BJ (cell line): ENCODE measurements at regions of chr7 and their contacts with region 1.

Region 1: GRCh38 chr7:133434055-133434865 is 181.4 kb downstream of the EXOC4 start:
- DNase-seq: no peak
- H3K4me3 ChIP-seq: no peak overlapping the region
- H3K27me3 ChIP-seq: no peaks in the 10 kb centered on the region
- CTCF ChIP-seq: peak; percentile 54

Region 2: GRCh38 chr7:132709971-132710567 is 724.2 kb before region 1 on chr7:
- CTCF ChIA-PET with region 1: interaction called, 14 read pairs
- POLR2A ChIA-PET with region 1: no interaction called
- DNase-seq: no peak
- H3K4me3 ChIP-seq: no peak overlapping the region
- H3K27me3 ChIP-seq: no peaks in the 10 kb centered on the region; the same call in 1 of the 2 replicates
- CTCF ChIP-seq: peak; percentile 62

Region 3: GRCh38 chr7:133314084-133314483 is 120.2 kb before region 1 on chr7:
- CTCF ChIA-PET with region 1: no interaction called
- POLR2A ChIA-PET with region 1: interaction called, 14 read pairs
- DNase-seq: no peak
- H3K4me3 ChIP-seq: no peak overlapping the region
- H3K27me3 ChIP-seq: no peaks in the 10 kb centered on the region
- CTCF ChIP-seq: no peak

Region 4: DNA sequence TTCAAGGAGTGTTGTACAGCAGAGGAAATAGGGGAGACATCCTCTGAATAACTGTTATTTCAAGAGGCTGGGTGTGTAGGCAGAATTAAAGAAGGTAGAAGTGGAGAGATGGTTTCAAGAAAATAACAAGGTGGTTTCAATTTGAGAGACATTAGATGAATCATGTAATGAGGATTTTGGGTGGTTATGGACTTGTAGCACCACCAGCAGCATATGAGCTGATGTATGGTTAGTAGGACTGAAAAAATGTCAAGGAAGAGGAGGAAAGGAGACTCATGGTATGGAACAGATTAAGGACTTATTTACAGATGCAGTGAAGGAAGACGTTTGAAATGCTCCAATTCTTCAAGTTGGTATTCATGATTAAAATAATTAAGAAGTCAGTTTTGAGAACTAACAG is 15.2 kb before region 1 on chr7:
- CTCF ChIA-PET with region 1: interaction called, 10 read pairs
- POLR2A ChIA-PET with region 1: no interaction called
- DNase-seq: no peak
- H3K4me3 ChIP-seq: no peak overlapping the region
- H3K27me3 ChIP-seq: no peaks in the 10 kb centered on the region
- CTCF ChIP-seq: no peak